Caco-2 (cell line): ENCODE measurements at regions of chr4 and their contacts with region 1.

Region 1: DNA sequence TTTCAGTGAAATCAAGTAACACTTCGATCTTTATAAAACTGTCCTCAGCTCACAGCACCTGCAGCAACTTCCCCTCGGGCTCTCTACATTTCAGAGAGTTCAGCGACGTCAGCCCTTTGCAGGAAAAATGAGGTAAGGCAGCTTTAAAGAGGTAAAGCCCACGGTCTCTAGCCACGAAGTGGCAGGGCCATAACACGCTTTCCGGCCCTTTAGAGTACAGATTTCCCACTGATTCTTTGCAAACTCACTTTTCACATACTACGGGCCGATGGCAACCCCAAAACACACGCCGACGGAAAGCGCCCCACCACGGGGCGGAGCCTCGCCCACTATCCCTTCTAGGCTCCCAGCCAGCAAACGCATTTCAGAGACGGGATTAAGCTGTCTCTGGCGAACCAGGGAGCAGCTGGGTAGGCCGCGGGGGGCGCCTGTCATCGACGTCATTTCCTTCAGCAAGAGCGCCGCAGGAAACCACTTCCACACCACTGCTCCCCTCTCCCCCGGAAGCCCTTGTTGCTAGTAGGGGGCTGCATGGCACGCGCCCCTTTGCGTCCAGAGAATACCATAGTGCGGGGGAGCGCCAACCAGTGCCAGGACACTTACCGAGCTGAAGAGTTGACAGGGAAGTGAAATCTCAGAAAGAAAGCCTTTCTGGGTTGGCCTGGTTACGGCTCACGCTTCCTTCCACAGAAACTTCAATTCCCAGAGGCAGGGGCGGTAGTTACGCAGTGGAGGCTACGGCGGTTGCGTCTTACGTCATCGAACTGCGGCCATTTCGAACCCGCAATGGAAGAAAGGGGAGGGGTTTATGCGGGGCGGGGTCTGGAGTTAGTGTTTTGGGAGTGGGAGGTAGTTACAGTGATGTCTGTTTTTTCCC is at the start of gene TRMT10A:
- DNase-seq: peak; percentile 94 to 96
- H3K4me3 ChIP-seq: peak within 1 kb of the TSS; percentile 89
- H3K4me3 Mint-ChIP-seq: peak within 1 kb of the TSS; percentile 94
- H3K27ac Mint-ChIP-seq: peak within 1 kb of the TSS; percentile 99
- H3K4me1 ChIP-seq: no peaks in the 10 kb centered on the region
- H3K4me1 Mint-ChIP-seq: no peaks in the 10 kb centered on the region
- H3K27me3 ChIP-seq: no peaks in the 10 kb centered on the region
- H3K27me3 Mint-ChIP-seq: no peaks in the 10 kb centered on the region
- CTCF ChIP-seq: no peak
- total RNA-seq, gene TRMT10A: 5.1 and 5.8 TPM in 2 replicates

Region 2: DNA sequence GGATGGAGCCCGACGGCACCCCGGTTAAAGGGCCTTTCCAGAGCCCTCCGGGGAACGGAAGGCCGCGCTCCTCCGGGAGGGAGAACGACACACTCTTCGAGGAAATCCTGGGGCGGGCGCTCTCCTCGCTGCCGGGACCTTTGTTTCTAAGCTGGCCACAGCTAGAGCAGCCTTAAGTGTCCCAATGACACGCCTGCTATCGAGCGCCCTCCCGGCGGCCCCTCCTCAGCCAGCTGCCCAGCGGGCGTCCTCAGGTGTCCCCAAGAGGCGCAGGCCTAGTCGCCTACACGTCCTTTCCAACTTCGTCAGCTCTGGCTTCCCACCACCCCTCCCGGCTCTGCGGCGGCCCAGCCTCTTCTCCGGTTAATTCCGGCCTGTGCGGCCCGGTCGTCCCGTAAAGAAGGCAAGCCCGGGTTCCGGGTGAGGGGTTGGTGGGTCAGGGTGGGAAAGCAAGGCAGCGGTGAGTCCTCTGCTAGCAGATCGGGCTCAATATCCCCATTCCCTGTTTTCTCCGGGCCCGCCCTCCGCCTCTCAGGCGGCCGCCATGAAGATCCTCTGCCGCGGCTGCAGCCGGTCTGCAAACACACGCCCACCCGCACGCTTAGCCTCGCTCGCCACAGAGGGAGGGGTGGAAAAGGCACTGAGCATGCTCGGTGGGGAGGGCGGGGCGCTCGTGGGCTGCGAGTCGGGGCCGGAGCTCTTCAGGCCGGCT is 1302.8 kb before region 1 on chr4:
- CTCF ChIA-PET with region 1: no interaction called
- POLR2A ChIA-PET with region 1: no interaction called
- intact Hi-C with region 1: loop called (anchors 5 kb)
- DNase-seq: peak; percentile 96 to 97
- H3K4me3 ChIP-seq: peak overlapping the region; percentile 50
- H3K4me3 Mint-ChIP-seq: peak overlapping the region; percentile 89
- H3K27ac Mint-ChIP-seq: peak overlapping the region; percentile 96
- H3K4me1 ChIP-seq: peaks cover 10% of the 10 kb centered on the region
- H3K4me1 Mint-ChIP-seq: peaks cover 20% of the 10 kb centered on the region
- H3K27me3 ChIP-seq: no peaks in the 10 kb centered on the region
- H3K27me3 Mint-ChIP-seq: no peaks in the 10 kb centered on the region
- CTCF ChIP-seq: peak in 1 of 2 experiments; percentile 0

Region 3: DNA sequence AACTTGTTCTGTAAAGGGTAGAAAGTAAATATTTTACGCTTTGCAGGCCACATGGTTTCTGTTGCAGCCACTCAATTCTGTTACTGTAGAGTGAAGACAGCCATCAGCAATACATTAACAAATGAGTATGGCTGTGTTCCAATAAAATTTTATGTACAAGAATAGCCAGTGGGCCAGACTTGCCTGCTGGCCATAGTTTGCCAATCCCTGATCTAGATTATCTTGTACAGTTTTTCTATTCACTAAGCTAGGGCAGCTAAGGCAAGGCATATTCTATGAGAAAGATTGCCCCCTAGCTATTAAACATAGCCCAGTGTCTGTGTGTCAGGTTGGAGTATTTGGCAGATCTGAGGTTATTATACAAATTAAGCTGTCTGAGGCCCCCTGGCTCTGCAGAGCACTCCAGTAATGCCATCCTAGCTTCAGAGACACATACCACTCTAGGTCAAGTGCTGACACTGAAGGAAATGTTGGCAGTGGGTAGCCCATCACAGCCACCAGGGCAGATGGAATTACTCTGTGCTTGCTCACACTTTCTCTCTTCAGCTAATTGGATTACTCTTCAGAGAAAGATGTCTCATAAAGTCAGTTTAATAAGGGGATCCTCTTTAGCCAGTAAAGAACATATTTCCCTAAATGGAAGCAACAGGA is 51.7 kb after region 1 on chr4:
- CTCF ChIA-PET with region 1: no interaction called
- POLR2A ChIA-PET with region 1: no interaction called
- intact Hi-C with region 1: loop called (anchors 2 kb)
- DNase-seq: no peak
- H3K4me3 ChIP-seq: no peak overlapping the region
- H3K4me3 Mint-ChIP-seq: no peak overlapping the region
- H3K27ac Mint-ChIP-seq: no peak overlapping the region
- H3K4me1 ChIP-seq: peaks cover 9% of the 10 kb centered on the region
- H3K4me1 Mint-ChIP-seq: peaks cover 7% of the 10 kb centered on the region
- H3K27me3 ChIP-seq: no peaks in the 10 kb centered on the region
- H3K27me3 Mint-ChIP-seq: no peaks in the 10 kb centered on the region
- CTCF ChIP-seq: no peak

Region 4: GRCh38 chr4:99723612-99724011 is 160.1 kb after region 1 on chr4:
- CTCF ChIA-PET with region 1: no interaction called
- POLR2A ChIA-PET with region 1: no interaction called
- intact Hi-C with region 1: loop called (anchors 5 kb)
- DNase-seq: no peak
- H3K4me3 ChIP-seq: no peak overlapping the region
- H3K4me3 Mint-ChIP-seq: no peak overlapping the region
- H3K27ac Mint-ChIP-seq: no peak overlapping the region
- H3K4me1 ChIP-seq: no peaks in the 10 kb centered on the region
- H3K4me1 Mint-ChIP-seq: no peaks in the 10 kb centered on the region
- H3K27me3 ChIP-seq: no peaks in the 10 kb centered on the region
- H3K27me3 Mint-ChIP-seq: peaks cover 4% of the 10 kb centered on the region
- CTCF ChIP-seq: no peak

Region 5: DNA sequence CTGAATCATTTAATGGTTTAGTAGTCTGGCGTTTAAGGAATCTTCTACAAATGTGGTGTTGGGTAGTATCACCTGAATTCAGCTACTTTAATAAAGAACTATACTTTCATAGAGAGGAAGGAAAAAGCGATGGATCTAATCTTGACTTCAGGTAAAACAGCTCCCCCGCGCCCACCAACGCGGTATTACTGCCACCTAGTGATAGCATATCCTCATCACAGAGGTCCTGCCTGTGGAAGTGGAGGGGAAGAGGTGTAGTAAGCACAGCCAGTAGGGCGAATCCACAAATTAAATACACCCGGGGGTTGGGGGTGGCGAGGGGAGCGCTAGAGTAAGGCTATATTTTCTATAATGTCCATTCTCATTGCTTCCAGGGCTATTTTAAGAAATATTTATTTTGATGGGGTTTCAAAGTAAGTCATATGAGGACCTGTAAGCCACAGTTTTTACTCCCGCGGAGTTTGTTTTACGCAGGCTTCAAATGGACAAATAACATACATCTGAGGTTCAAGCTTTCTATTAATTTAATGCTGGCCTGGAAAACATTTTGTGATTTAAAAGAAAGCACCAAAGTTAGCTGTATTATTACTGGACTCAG is 244.8 kb after region 1 on chr4:
- CTCF ChIA-PET with region 1: interaction called, 20 read pairs
- POLR2A ChIA-PET with region 1: interaction called, 3 read pairs
- intact Hi-C with region 1: no loop called
- DNase-seq: peak; percentile 71 to 75
- H3K4me3 ChIP-seq: no peak overlapping the region
- H3K4me3 Mint-ChIP-seq: no peak overlapping the region
- H3K27ac Mint-ChIP-seq: no peak overlapping the region
- H3K4me1 ChIP-seq: no peaks in the 10 kb centered on the region
- H3K4me1 Mint-ChIP-seq: no peaks in the 10 kb centered on the region
- H3K27me3 ChIP-seq: no peaks in the 10 kb centered on the region; the same call in 1 of the 2 replicates
- H3K27me3 Mint-ChIP-seq: peaks cover 3% of the 10 kb centered on the region
- CTCF ChIP-seq: peak; percentile 64 to 78

Region 6: GRCh38 chr4:99885063-99885664 is 321.6 kb after region 1 on chr4:
- CTCF ChIA-PET with region 1: no interaction called
- POLR2A ChIA-PET with region 1: no interaction called
- intact Hi-C with region 1: loop called (anchors 1 kb)
- DNase-seq: peak in 1 of 2 experiments; percentile 29
- H3K4me3 ChIP-seq: no peak overlapping the region
- H3K4me3 Mint-ChIP-seq: no peak overlapping the region
- H3K27ac Mint-ChIP-seq: no peak overlapping the region
- H3K4me1 ChIP-seq: no peaks in the 10 kb centered on the region
- H3K4me1 Mint-ChIP-seq: no peaks in the 10 kb centered on the region
- H3K27me3 ChIP-seq: no peaks in the 10 kb centered on the region
- H3K27me3 Mint-ChIP-seq: no peaks in the 10 kb centered on the region
- CTCF ChIP-seq: peak; percentile 37 to 55

Region 7: DNA sequence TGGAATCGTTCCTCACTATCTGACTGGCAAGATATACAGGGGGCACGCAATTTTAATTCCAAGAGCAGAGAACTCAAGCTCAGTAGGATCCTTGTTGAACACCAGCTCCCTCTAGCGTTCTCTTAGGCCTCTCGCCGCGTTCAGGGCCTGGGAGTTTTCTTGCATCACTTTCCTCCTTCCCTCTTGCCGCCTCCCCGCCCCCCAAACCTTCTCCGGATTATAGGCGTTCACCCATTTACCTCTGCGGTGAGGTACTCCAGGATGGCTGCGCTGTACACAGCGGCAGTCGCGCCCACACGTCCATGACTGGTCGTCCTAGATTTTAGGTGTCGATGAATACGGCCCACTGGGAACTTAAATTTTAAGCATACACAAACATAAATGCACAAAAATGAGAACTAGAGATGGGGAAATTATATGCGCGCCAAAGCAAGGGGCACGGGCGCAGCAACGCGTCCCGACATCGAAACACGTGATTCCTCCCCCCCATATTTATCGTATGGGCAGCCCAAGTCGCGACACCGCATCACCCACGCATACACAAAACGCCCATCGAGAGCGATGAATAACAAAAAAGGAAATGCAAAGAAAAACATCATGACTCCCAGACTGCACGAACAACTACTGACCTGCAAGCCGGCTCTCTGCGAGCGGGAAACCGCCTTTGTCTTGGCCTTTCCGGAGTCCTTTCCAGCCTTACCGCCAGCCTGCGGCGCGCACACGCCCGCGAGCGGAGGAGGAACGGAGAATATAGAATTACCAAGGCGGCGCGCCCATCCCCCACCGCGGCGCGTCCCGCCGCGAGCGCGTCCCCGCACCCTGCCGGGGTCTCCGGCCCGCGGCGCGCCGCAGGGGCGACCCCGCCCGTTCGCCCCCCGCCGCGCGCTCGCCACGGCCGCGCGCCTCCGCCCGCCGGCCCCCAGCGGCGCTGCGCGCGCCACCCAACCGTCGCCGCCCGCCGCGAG is 385.8 kb after region 1 on chr4:
- CTCF ChIA-PET with region 1: interaction called, 3 read pairs
- POLR2A ChIA-PET with region 1: no interaction called
- intact Hi-C with region 1: loop called (anchors 1 kb)
- DNase-seq: peak; percentile 91 to 94
- H3K4me3 ChIP-seq: peak overlapping the region; percentile 72
- H3K4me3 Mint-ChIP-seq: no peak overlapping the region
- H3K27ac Mint-ChIP-seq: no peak overlapping the region
- H3K4me1 ChIP-seq: peaks cover 16% of the 10 kb centered on the region; the same call in 1 of the 2 replicates
- H3K4me1 Mint-ChIP-seq: no peaks in the 10 kb centered on the region
- H3K27me3 ChIP-seq: no peaks in the 10 kb centered on the region
- H3K27me3 Mint-ChIP-seq: no peaks in the 10 kb centered on the region
- CTCF ChIP-seq: peak; percentile 60 to 86